Activated CD8-positive, alpha-beta T cell treated with anti-CD3 and anti-CD28 coated beads, Interleukin-2, amount 10 ng/mL, durations not matched to agents 7 days and 5 days (primary cell): ENCODE measurements at regions of chr3 and their contacts with region 1.

Region 1: GRCh38 chr3:138935848-138936740 is 10.8 kb downstream of the FOXL2 start:
- DNase-seq: peak; percentile 65
- ATAC-seq: peak; percentile 78
- H3K4me3 Mint-ChIP-seq: peak overlapping the region; percentile 61
- H3K27ac Mint-ChIP-seq: no peak overlapping the region
- H3K4me1 Mint-ChIP-seq: peaks cover 33% of the 10 kb centered on the region
- H3K27me3 Mint-ChIP-seq: peaks cover 68% of the 10 kb centered on the region

Region 2: GRCh38 chr3:138686771-138687221 is 249.3 kb before region 1 on chr3:
- CTCF ChIA-PET with region 1: interaction called, 10 read pairs
- POLR2A ChIA-PET with region 1: no interaction called
- DNase-seq: no peak
- ATAC-seq: no peak
- H3K4me3 Mint-ChIP-seq: no peak overlapping the region
- H3K27ac Mint-ChIP-seq: no peak overlapping the region
- H3K4me1 Mint-ChIP-seq: peaks cover 8% of the 10 kb centered on the region
- H3K27me3 Mint-ChIP-seq: no peaks in the 10 kb centered on the region

Region 3: GRCh38 chr3:138946181-138947059 is 10.3 kb after region 1 on chr3:
- CTCF ChIA-PET with region 1: interaction called, 18 read pairs
- POLR2A ChIA-PET with region 1: interaction called, 3 read pairs
- DNase-seq: no peak
- ATAC-seq: no peak
- H3K4me3 Mint-ChIP-seq: peak overlapping the region; percentile 49
- H3K27ac Mint-ChIP-seq: no peak overlapping the region
- H3K4me1 Mint-ChIP-seq: peaks cover 34% of the 10 kb centered on the region
- H3K27me3 Mint-ChIP-seq: peaks cover 84% of the 10 kb centered on the region